Dendritic cell treated with granulocyte-macrophage colony-stimulating factor and Interleukin-4, amounts not matched to agents 40 ng/mL and 50 ng/mL, for 4 days (primary cell): ENCODE measurements at regions of chr2 and their contacts with region 1.

Region 1: DNA sequence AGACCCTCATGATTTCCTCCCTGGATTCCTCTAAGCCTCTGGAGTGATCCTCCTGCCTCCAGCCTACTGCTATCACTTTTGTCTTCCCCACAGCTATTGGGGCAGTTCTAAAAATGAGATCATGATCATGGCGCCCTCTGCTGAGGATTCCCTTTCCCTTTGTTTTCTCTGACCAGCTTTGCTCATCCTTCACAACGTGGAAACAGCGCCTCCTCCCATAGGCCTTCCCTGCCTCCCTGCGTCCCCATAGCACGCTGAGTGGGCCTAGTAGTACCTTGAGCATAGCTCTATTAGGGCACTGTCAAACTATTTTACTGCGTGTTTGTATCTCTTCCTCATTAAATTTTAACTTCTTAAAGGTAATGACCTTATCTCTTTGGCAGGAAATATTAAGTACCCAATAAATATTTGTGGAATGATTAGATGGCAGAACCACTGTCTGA is 207.0 kb upstream of the FANCL start:
- H3K4me3 Mint-ChIP-seq: no peak overlapping the region
- H3K27ac Mint-ChIP-seq: no peak overlapping the region
- H3K4me1 Mint-ChIP-seq: peaks cover 19% of the 10 kb centered on the region
- H3K27me3 Mint-ChIP-seq: no peaks in the 10 kb centered on the region

Region 2: DNA sequence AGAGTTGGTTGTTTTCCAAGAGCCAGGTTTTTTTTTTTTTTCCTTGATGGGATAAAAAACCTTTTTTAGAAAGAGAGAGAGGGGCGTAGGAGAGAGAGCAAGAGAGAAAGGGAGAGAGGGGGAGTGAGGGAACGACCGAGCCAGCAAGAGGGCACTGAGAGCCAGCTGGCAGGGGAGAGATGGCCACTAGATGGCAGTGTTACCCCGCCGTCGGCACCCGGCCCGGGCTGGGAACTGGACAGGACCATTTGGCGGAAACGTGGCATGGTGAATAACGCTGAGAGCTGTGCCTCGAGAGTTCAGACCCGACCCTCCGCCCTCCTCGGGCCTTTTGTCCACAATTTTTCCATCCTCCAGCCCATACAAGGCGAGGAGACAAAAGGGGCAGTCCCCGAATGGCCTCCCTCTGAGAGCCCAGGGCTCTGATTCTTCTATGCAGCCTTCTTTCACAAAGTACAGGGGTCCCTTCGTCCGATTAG is 688.2 kb before region 1 on chr2:
- intact Hi-C with region 1: loop called (anchors 5 kb)
- H3K4me3 Mint-ChIP-seq: peak overlapping the region; percentile 59
- H3K27ac Mint-ChIP-seq: no peak overlapping the region
- H3K4me1 Mint-ChIP-seq: peaks cover 11% of the 10 kb centered on the region
- H3K27me3 Mint-ChIP-seq: no peaks in the 10 kb centered on the region

Region 3: DNA sequence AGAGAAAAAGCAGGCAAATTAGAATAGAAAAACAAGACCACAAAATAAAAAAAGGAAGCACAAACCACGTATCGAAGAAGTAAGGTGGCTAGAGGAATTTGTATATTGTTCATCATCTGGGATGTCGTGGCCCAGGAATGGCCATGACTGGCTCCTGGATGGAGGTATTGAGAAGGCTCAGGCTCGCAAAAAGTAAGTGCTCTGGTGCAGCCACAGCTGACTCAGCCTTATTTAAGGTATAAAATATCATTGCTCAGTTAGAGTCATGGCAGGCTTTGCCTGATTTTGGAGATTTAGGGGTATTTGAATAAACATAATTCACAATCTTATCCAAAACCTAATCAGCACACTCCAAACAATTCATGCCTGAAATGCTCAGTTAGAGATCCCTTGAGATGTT is 128.6 kb before region 1 on chr2:
- intact Hi-C with region 1: no loop called
- H3K4me3 Mint-ChIP-seq: no peak overlapping the region
- H3K27ac Mint-ChIP-seq: no peak overlapping the region
- H3K4me1 Mint-ChIP-seq: no peaks in the 10 kb centered on the region
- H3K27me3 Mint-ChIP-seq: no peaks in the 10 kb centered on the region

Region 4: DNA sequence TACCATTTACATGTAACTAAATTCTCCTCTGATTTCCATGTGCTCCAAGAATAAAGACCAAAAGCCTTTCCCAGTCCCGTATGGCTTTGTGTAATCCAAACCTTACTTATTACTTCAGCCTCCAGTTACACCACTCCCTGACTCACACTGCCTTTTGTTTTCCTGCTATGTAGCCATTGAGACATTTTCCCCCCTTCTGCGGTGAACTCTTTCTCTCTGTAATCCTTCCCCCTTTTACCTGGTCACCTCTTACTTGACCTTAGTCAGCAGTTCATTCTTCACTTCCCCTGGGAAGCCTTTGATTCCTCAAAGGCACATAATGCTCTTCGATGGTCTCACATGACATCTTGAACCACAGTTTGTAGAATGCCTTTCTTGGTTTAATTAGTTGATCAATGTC is 49.1 kb after region 1 on chr2:
- intact Hi-C with region 1: no loop called
- H3K4me3 Mint-ChIP-seq: no peak overlapping the region
- H3K27ac Mint-ChIP-seq: no peak overlapping the region
- H3K4me1 Mint-ChIP-seq: no peaks in the 10 kb centered on the region
- H3K27me3 Mint-ChIP-seq: no peaks in the 10 kb centered on the region